ENCODE measurements at regions of chr17 and their contacts with region 1.

Region 1: DNA sequence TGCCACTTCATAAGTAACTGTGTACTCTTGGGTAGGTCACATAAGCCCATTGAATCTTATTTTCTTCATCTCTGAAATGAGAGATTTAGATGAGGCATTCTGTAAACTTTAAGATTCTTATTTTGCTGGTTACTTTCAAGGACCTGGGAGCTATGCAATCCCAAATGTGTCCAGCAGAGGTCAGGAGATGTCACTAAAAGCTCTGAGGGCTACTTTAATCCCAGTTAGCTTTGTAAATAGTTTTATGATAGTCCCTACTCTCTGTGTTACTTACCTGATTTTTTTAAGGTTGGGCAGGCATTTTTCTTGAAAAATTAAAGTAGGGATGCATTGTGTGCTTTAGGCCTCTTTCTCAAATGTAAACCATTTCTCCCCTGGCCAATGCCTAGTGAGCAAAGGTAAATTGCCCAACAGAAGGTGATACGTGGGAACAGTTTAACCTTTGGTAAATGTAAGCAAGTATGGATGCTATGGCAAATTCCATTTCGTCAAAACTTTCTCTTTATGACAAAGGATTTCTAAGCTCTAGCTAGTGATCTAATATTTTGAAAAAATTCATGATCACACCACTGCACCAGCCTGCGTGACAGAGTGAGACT is 57.1 kb upstream of the WSB1 start:
- DNase-seq: peak; percentile 81
- ATAC-seq: peak; percentile 78
- H3K4me3 ChIP-seq: no peak overlapping the region
- H3K4me3 Mint-ChIP-seq: no peak overlapping the region
- H3K27ac ChIP-seq: no peak overlapping the region
- H3K27ac Mint-ChIP-seq: no peak overlapping the region
- H3K4me1 ChIP-seq: peaks cover 11 to 22% of the 10 kb centered on the region in 2 donors
- H3K4me1 Mint-ChIP-seq: peaks cover 34% of the 10 kb centered on the region
- H3K27me3 ChIP-seq: no peaks in the 10 kb centered on the region
- H3K27me3 Mint-ChIP-seq: no peaks in the 10 kb centered on the region
- CTCF ChIP-seq: peak; percentile 99

Region 2: GRCh38 chr17:27106347-27106981 is 130.4 kb before region 1 on chr17:
- CTCF ChIA-PET with region 1: no interaction called
- POLR2A ChIA-PET with region 1: no interaction called
- intact Hi-C with region 1: no loop called
- DNase-seq: no peak
- ATAC-seq: no peak
- H3K4me3 ChIP-seq: no peak overlapping the region
- H3K4me3 Mint-ChIP-seq: no peak overlapping the region
- H3K27ac ChIP-seq: no peak overlapping the region
- H3K27ac Mint-ChIP-seq: no peak overlapping the region
- H3K4me1 ChIP-seq: no peaks in the 10 kb centered on the region
- H3K4me1 Mint-ChIP-seq: no peaks in the 10 kb centered on the region
- H3K27me3 ChIP-seq: no peaks in the 10 kb centered on the region
- H3K27me3 Mint-ChIP-seq: peaks cover 13% of the 10 kb centered on the region
- CTCF ChIP-seq: no peak

Region 3: DNA sequence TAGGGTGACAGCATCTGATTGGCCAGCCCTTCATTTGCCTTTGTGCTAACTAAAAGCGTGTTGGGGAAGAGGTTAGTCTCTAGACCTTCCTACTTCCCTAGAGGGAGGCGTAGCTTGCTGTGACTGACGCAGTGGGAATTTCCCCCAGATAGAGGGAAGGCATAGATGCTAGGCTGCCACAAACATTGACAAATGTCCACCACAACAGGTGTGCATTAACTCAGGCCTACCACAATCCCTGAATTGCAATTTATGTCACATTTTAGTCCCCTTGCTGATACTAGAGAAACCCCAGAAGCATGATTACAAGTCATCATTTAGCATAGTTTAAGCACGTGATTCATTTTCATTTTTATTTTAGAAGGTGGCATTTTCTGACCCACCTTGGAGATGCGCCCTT is 19.2 kb before region 1 on chr17:
- CTCF ChIA-PET with region 1: interaction called, 44 read pairs
- POLR2A ChIA-PET with region 1: no interaction called
- intact Hi-C with region 1: loop called (anchors 1 kb)
- DNase-seq: peak; percentile 94
- ATAC-seq: peak; percentile 85
- H3K4me3 ChIP-seq: peak overlapping the region in 1 of 5 experiments; percentile 9
- H3K4me3 Mint-ChIP-seq: peak overlapping the region; percentile 64
- H3K27ac ChIP-seq: peak overlapping the region; percentile 85 to 98
- H3K27ac Mint-ChIP-seq: peak overlapping the region; percentile 96
- H3K4me1 ChIP-seq: peaks cover 34 to 41% of the 10 kb centered on the region in 2 donors
- H3K4me1 Mint-ChIP-seq: peaks cover 48% of the 10 kb centered on the region
- H3K27me3 ChIP-seq: no peaks in the 10 kb centered on the region
- H3K27me3 Mint-ChIP-seq: no peaks in the 10 kb centered on the region
- CTCF ChIP-seq: no peak

Region 4: GRCh38 chr17:27293898-27294688 is 57.3 kb after region 1 on chr17 and contains the start of gene WSB1:
- CTCF ChIA-PET with region 1: interaction called, 50 read pairs
- POLR2A ChIA-PET with region 1: interaction called, 4 read pairs
- intact Hi-C with region 1: loop called (anchors 2 kb)
- DNase-seq: peak; percentile 97
- ATAC-seq: peak; percentile 86
- H3K4me3 ChIP-seq: peak within 1 kb of the TSS; percentile 89 to 100 (median 96)
- H3K4me3 Mint-ChIP-seq: peak within 1 kb of the TSS; percentile 89
- H3K27ac ChIP-seq: peak within 1 kb of the TSS; percentile 99
- H3K27ac Mint-ChIP-seq: peak within 1 kb of the TSS; percentile 99
- H3K4me1 ChIP-seq: peaks cover 37 to 39% of the 10 kb centered on the region in 2 donors
- H3K4me1 Mint-ChIP-seq: peaks cover 45% of the 10 kb centered on the region
- H3K27me3 ChIP-seq: no peaks in the 10 kb centered on the region
- H3K27me3 Mint-ChIP-seq: no peaks in the 10 kb centered on the region
- CTCF ChIP-seq: no peak
- total RNA-seq, gene WSB1: 215 and 217 TPM in 2 replicates

Region 5: GRCh38 chr17:27381007-27381501 is 144.2 kb after region 1 on chr17:
- CTCF ChIA-PET with region 1: interaction called, 52 read pairs
- POLR2A ChIA-PET with region 1: no interaction called
- intact Hi-C with region 1: loop called (anchors 1 kb)
- DNase-seq: peak; percentile 79
- ATAC-seq: peak; percentile 95
- H3K4me3 ChIP-seq: no peak overlapping the region
- H3K4me3 Mint-ChIP-seq: no peak overlapping the region
- H3K27ac ChIP-seq: no peak overlapping the region
- H3K27ac Mint-ChIP-seq: no peak overlapping the region
- H3K4me1 ChIP-seq: peaks cover 0 to 4% of the 10 kb centered on the region in 2 donors
- H3K4me1 Mint-ChIP-seq: peaks cover 6% of the 10 kb centered on the region
- H3K27me3 ChIP-seq: peaks cover 0 to 20% (median 3%) of the 10 kb centered on the region in 4 experiments
- H3K27me3 Mint-ChIP-seq: peaks cover 18% of the 10 kb centered on the region
- CTCF ChIP-seq: peak; percentile 97

Region 6: DNA sequence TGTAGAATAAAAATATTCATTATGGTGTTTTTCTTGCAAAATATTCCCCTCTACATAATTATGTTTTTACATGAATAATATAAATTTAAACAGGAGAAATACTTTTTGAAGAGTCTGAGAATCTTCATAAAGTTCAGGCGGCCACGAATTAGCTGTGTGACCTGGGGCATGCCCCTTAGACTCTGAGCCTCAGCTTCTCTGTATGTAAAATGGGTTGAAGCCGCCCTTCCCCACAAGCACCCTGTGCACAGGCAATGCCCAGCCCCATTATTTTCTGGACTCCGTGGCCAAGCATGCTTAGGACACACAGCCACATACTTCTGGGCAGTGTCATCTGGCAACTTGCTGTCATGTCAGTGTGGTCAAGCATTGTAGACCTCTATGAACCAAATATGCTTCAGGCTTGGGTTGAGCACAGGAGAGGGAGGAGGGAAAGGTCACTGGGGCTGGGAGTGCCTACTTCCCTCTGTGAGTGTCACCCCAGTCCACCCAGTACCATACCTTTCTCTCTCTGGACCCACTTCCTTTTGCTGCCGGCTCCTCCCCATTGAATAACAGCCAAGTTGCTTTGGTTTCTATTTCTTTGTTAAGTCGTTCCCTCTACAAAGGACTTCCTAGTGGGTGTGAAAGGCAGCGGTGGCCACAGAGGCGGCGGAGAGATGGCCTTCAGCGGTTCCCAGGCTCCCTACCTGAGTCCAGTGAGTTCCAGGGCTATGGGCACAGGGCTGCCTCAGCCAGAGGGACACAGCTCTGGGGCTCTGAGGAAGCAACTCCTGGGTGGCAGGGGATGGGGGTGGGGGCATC is 394.0 kb after region 1 on chr17 and contains the start of gene LGALS9:
- CTCF ChIA-PET with region 1: interaction called, 13 read pairs
- POLR2A ChIA-PET with region 1: no interaction called
- intact Hi-C with region 1: no loop called
- DNase-seq: peak; percentile 63
- ATAC-seq: peak; percentile 57
- H3K4me3 ChIP-seq: peak within 1 kb of the TSS; percentile 53 to 98 (median 78)
- H3K4me3 Mint-ChIP-seq: peak within 1 kb of the TSS; percentile 88
- H3K27ac ChIP-seq: peak within 1 kb of the TSS; percentile 77 to 83
- H3K27ac Mint-ChIP-seq: peak within 1 kb of the TSS; percentile 93
- H3K4me1 ChIP-seq: peaks cover 37 to 53% of the 10 kb centered on the region in 2 donors
- H3K4me1 Mint-ChIP-seq: peaks cover 50% of the 10 kb centered on the region
- H3K27me3 ChIP-seq: no peaks in the 10 kb centered on the region
- H3K27me3 Mint-ChIP-seq: no peaks in the 10 kb centered on the region
- CTCF ChIP-seq: no peak
- total RNA-seq, gene LGALS9: 65.9 and 68.1 TPM in 2 replicates